Thyroid gland (tissue), 4 donors: ENCODE measurements at regions of chr14 and their contacts with region 1.

Region 1: DNA sequence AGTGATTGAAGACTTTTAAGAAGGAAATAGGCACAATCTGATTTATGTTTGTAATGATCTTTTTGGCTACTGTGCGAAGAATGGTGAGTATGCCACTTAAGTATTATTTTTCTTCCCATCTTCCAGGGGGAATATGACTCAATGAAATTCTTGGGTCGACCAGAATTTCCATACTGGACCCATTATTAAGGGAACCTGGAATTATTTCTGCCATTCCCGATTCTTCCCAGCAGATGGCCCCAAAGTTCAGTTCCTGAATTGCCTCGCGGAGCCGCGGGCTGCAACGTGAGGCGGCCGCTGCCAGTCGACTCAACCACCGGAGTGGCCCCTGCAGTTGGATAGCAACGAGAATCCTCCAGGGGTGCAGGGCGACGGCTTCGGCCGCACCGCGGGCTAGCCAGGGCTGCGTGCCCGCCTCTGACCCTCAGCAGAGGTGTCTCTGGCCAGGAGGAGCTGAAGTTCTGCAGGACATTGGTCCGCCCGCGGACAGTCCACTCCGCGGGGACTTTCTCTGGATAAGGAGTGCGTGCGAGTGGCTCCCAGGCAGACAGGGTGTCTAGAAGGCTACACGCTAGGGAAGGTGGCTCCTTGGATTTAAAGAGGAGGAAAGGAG is 628 bp upstream of the TSHR start:
- DNase-seq: peak; percentile 90 to 91
- H3K4me3 ChIP-seq: peak overlapping the region; percentile 26 to 65 (median 36)
- H3K27ac ChIP-seq: peak overlapping the region; percentile 93 to 95 (median 94)
- H3K4me1 ChIP-seq: no peaks in the 10 kb centered on the region
- H3K27me3 ChIP-seq: no peaks in the 10 kb centered on the region
- CTCF ChIP-seq: peak; percentile 60 to 93 (median 86)
- POLR2A ChIP-seq: peak in 1 of 2 donors; percentile 80

Region 2: DNA sequence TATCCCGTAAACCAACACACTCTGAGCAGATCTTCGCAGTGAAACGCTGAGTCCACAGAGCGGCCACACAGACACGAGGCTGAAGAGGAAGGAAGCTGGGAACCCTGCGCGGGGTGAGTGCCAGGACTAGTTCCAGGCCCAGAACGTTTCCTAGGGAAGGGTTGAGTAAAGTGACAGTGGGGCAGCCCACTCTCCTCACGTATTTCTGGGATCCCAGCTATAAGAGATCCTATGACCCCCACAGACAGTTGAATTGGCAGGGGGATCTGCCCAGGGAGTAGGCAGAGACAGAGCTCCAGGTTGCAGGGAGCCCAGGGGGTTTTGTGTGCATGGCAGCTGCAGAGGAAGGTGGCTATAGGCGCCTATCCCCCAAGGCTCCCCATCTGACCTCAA is 214.9 kb after region 1 on chr14:
- intact Hi-C with region 1: loop called (anchors 5 kb)
- DNase-seq: peak; percentile 58 to 64
- H3K4me3 ChIP-seq: peak overlapping the region in 2 of 3 donors; percentile 41 to 46
- H3K27ac ChIP-seq: peak overlapping the region; percentile 92 to 98 (median 96)
- H3K4me1 ChIP-seq: peaks cover 35 to 50% of the 10 kb centered on the region in 2 donors
- H3K27me3 ChIP-seq: no peaks in the 10 kb centered on the region
- CTCF ChIP-seq: no peak
- POLR2A ChIP-seq: no peak